Left ventricle myocardium inferior (tissue), 1 donor: ENCODE measurements at regions of chr18 and their contacts with region 1.

Region 1: GRCh38 chr18:6878556-6879297 is 149.2 kb downstream of the ARHGAP28 start:
- DNase-seq: no peak
- H3K4me3 ChIP-seq: no peak overlapping the region
- H3K27ac ChIP-seq: no peak overlapping the region
- H3K4me1 ChIP-seq: no peaks in the 10 kb centered on the region
- H3K27me3 ChIP-seq: no peaks in the 10 kb centered on the region
- CTCF ChIP-seq: no peak

Region 2: GRCh38 chr18:6729247-6730091 is 149.3 kb before region 1 on chr18 and contains the start of gene ARHGAP28:
- intact Hi-C with region 1: loop called (anchors 10 kb)
- DNase-seq: peak; percentile 87
- H3K4me3 ChIP-seq: peak within 1 kb of the TSS; percentile 79
- H3K27ac ChIP-seq: peak within 1 kb of the TSS; percentile 89
- H3K4me1 ChIP-seq: peaks cover 17% of the 10 kb centered on the region
- H3K27me3 ChIP-seq: no peaks in the 10 kb centered on the region
- CTCF ChIP-seq: peak; percentile 55
- total RNA-seq, gene ARHGAP28: 1.5 TPM